HepG2 (cell line): ENCODE measurements at regions of chr2 and their contacts with region 1.

Region 1: GRCh38 chr2:120470041-120470965 is 124.4 kb downstream of the INHBB start:
- DNase-seq: peak; percentile 95
- ATAC-seq: peak; percentile 70
- H3K4me3 ChIP-seq: peak overlapping the region in 2 of 3 experiments; percentile 1 to 27; a peak in 2 of 6 replicates
- H3K27ac ChIP-seq: peak overlapping the region; percentile 36
- H3K4me1 ChIP-seq: peaks cover 87% of the 10 kb centered on the region
- H3K27me3 ChIP-seq: no peaks in the 10 kb centered on the region
- CTCF ChIP-seq: peak; percentile 26; the same call in 1 of the 2 replicates
- EP300 ChIP-seq: peak in 1 of 2 experiments; percentile 85; a peak in 3 of 4 replicates
- POLR2A ChIP-seq: peak in 1 of 2 experiments; percentile 60; a peak in 2 of 4 replicates
- RAD21 ChIP-seq: peak; percentile 34; the same call in 1 of the 2 replicates

Region 2: GRCh38 chr2:120396013-120396885 is 74.1 kb before region 1 on chr2:
- CTCF ChIA-PET with region 1: no interaction called
- POLR2A ChIA-PET with region 1: interaction called, 55 read pairs
- in situ Hi-C with region 1: no loop called
- intact Hi-C with region 1: loop called (anchors 1 kb)
- DNase-seq: peak; percentile 44
- ATAC-seq: no peak
- H3K4me3 ChIP-seq: no peak overlapping the region
- H3K27ac ChIP-seq: no peak overlapping the region
- H3K4me1 ChIP-seq: peaks cover 60% of the 10 kb centered on the region
- H3K27me3 ChIP-seq: peaks cover 0 to 3% of the 10 kb centered on the region in 2 experiments; a peak in 2 of 5 replicates
- CTCF ChIP-seq: no peak
- EP300 ChIP-seq: no peak
- POLR2A ChIP-seq: no peak
- RAD21 ChIP-seq: no peak

Region 3: DNA sequence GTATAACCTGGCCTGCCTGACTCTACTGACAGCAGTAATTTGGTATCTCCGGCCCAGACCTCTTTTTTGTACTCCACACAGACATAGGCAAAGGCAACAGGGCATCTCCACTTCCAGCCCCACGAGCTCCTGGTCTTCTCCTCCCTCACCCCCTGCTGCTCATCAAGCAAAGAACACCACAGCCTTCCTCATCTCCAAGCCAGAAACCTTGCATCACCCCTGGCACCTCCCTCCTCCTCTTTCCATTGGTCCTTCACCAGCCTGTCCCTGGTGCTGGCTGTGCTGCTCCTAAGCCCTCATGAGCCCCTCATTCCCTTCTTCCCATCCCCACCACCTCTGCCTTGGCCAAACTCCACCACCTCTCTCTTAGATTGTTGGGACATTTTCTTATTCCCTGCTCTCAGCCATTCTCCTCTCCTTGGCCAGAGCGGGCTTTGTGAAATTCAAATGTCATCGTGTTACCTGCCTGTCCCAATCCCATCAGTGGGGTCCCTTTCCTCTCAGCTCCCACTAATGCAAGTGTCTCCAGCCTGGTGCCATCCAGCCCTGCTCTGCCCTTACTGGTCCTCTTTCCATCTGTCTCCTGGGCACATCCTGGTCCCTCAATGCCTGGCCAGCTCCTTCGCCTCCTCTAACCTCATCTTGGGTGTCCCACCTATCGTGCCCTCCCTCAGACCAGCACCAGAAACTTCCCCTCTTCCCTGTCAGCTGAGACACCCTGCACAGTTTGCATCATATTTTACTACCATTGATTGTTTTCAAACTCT is 46.9 kb before region 1 on chr2:
- CTCF ChIA-PET with region 1: no interaction called
- POLR2A ChIA-PET with region 1: no interaction called
- in situ Hi-C with region 1: no loop called
- intact Hi-C with region 1: no loop called
- DNase-seq: no peak
- ATAC-seq: peak; percentile 26
- H3K4me3 ChIP-seq: no peak overlapping the region
- H3K27ac ChIP-seq: no peak overlapping the region
- H3K4me1 ChIP-seq: no peaks in the 10 kb centered on the region
- H3K27me3 ChIP-seq: peaks cover 6 to 76% of the 10 kb centered on the region in 2 experiments; a peak in 4 of 5 replicates
- CTCF ChIP-seq: no peak
- EP300 ChIP-seq: no peak
- POLR2A ChIP-seq: no peak
- RAD21 ChIP-seq: no peak

Region 4: GRCh38 chr2:120453635-120453998 is 16.7 kb before region 1 on chr2:
- CTCF ChIA-PET with region 1: no interaction called
- POLR2A ChIA-PET with region 1: interaction called, 31 read pairs
- in situ Hi-C with region 1: no loop called
- intact Hi-C with region 1: no loop called
- DNase-seq: peak; percentile 61
- ATAC-seq: peak; percentile 61
- H3K4me3 ChIP-seq: no peak overlapping the region
- H3K27ac ChIP-seq: no peak overlapping the region
- H3K4me1 ChIP-seq: peaks cover 32% of the 10 kb centered on the region
- H3K27me3 ChIP-seq: peaks cover 13 to 39% of the 10 kb centered on the region in 2 experiments; a peak in 4 of 5 replicates
- CTCF ChIP-seq: no peak
- EP300 ChIP-seq: no peak
- POLR2A ChIP-seq: no peak
- RAD21 ChIP-seq: no peak

Region 5: GRCh38 chr2:120497261-120497977 is 27.1 kb after region 1 on chr2:
- CTCF ChIA-PET with region 1: no interaction called
- POLR2A ChIA-PET with region 1: interaction called, 15 read pairs
- in situ Hi-C with region 1: no loop called
- intact Hi-C with region 1: no loop called
- DNase-seq: no peak
- ATAC-seq: no peak
- H3K4me3 ChIP-seq: no peak overlapping the region
- H3K27ac ChIP-seq: no peak overlapping the region
- H3K4me1 ChIP-seq: peaks cover 31% of the 10 kb centered on the region
- H3K27me3 ChIP-seq: peaks cover 0 to 48% of the 10 kb centered on the region in 2 experiments; a peak in 4 of 5 replicates
- CTCF ChIP-seq: no peak
- EP300 ChIP-seq: no peak
- POLR2A ChIP-seq: no peak
- RAD21 ChIP-seq: no peak

Region 6: DNA sequence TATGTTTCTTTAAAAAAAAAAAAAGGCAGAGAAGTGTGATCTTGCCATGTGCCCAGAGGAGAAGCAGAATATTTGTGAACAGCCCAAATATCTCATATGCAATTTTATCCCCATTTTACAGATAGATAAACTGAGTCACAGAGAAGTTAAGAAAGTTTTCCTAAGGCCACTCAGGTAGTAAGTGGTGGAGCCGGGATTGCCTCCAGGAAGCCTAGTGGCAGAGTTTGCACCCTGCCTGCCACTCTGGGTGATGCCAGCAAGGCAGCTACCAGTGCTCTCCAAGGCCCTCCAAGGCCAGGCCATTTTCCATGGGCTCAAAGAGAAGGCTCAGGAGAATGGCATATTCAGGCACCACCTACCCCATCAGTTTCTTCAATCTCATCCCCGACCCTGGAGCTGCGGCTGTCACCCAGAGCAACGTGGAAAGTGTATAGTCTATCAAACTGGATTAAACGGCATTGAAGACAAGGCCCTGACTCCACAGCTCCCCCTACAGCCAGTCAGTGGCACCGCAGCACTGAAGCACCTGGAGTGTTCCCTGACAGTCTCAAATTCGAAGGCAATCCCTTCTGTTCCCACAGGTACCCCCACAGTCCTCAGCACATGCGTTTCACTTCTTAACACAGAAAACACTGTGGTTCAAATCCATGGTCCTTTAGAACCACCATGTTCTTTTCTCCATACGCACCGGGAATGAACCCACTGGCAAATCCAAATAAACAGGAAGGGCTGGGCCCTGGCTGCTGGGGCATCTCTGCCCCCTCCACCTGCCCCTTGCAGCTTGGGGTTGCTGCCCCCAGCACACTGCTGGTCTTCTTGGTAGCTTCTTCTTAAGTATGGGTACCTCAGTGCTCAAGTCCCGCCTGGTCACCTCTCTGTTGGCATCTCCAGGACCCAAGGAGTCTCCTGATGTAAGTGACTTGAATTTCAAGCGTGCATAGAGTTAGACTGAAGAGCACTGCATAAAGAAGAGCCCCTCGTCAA is 50.9 kb after region 1 on chr2:
- CTCF ChIA-PET with region 1: no interaction called
- POLR2A ChIA-PET with region 1: interaction called, 16 read pairs
- in situ Hi-C with region 1: no loop called
- intact Hi-C with region 1: loop called (anchors 2 kb)
- DNase-seq: peak; percentile 60
- ATAC-seq: peak; percentile 37
- H3K4me3 ChIP-seq: no peak overlapping the region
- H3K27ac ChIP-seq: no peak overlapping the region
- H3K4me1 ChIP-seq: peaks cover 72% of the 10 kb centered on the region
- H3K27me3 ChIP-seq: peaks cover 0 to 5% of the 10 kb centered on the region in 2 experiments; a peak in 1 of 5 replicates
- CTCF ChIP-seq: peak; percentile 77
- EP300 ChIP-seq: no peak
- POLR2A ChIP-seq: no peak
- RAD21 ChIP-seq: peak; percentile 80

Region 7: GRCh38 chr2:120546048-120546864 is 76.0 kb after region 1 on chr2:
- CTCF ChIA-PET with region 1: no interaction called
- POLR2A ChIA-PET with region 1: interaction called, 105 read pairs
- in situ Hi-C with region 1: no loop called
- intact Hi-C with region 1: loop called (anchors 1 kb)
- DNase-seq: peak; percentile 97
- ATAC-seq: peak; percentile 82
- H3K4me3 ChIP-seq: peak overlapping the region; percentile 22 to 53 (median 30)
- H3K27ac ChIP-seq: peak overlapping the region; percentile 83
- H3K4me1 ChIP-seq: peaks cover 100% of the 10 kb centered on the region
- H3K27me3 ChIP-seq: no peaks in the 10 kb centered on the region
- CTCF ChIP-seq: peak; percentile 27; the same call in 1 of the 2 replicates
- EP300 ChIP-seq: peak in 1 of 2 experiments; percentile 80; a peak in 2 of 4 replicates
- POLR2A ChIP-seq: peak; percentile 19 to 46; a peak in 2 of 4 replicates
- RAD21 ChIP-seq: peak; percentile 38; the same call in 1 of the 2 replicates

Region 8: GRCh38 chr2:120712180-120712681 is 241.9 kb after region 1 on chr2:
- CTCF ChIA-PET with region 1: no interaction called
- POLR2A ChIA-PET with region 1: no interaction called
- in situ Hi-C with region 1: no loop called
- intact Hi-C with region 1: no loop called
- DNase-seq: no peak
- ATAC-seq: no peak
- H3K4me3 ChIP-seq: no peak overlapping the region
- H3K27ac ChIP-seq: no peak overlapping the region
- H3K4me1 ChIP-seq: no peaks in the 10 kb centered on the region
- H3K27me3 ChIP-seq: peaks cover 7 to 91% of the 10 kb centered on the region in 2 experiments; a peak in 4 of 5 replicates
- CTCF ChIP-seq: no peak
- EP300 ChIP-seq: no peak
- POLR2A ChIP-seq: no peak
- RAD21 ChIP-seq: no peak